ENCODE measurements at regions of chr17 and their contacts with region 1.

Region 1: DNA sequence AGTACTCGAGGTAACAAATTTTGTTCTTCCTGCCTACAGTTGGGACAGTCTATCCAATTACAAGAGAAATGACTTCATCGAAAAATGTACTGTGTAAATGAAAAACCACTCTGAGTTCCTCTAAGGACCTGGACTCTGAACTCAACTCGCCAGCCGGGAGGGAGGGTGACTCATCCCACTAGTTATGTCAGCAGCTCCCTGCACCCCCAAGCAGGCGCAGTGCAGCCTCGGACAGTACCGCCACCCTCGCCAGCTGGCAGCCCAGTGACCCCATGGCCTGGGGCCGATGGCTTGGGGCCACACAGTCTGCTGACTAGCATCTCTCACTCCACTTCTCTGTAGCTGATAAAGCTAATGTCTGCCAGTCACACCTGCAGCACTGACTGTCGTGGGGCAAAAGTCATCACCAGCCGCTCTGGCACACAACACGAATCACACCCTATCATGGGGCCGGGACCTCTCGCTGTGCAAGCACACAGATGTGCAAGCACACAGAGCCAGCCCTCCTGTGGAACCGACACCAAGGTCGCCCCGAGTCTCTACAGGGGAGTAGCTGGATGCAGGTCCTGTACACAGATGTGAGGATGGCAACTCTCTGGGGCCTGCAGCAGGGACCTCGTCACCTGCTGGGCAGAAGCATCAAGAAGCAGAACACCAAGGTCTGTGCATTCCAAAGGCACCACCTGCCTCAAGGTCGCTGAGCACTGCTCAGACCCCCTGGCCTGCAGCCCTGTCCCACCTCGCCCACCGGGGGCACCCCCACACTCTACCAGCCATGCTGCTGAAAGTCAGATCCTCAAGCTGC is 5.7 kb downstream of the CSNK1D start:
- DNase-seq: peak; percentile 76 to 87
- H3K4me3 ChIP-seq: peak overlapping the region; percentile 17; the same call in 1 of the 2 replicates
- H3K27ac ChIP-seq: peak overlapping the region; percentile 42; the same call in 1 of the 2 replicates
- H3K4me1 ChIP-seq: peaks cover 41% of the 10 kb centered on the region
- H3K27me3 ChIP-seq: no peaks in the 10 kb centered on the region
- CTCF ChIP-seq: no peak

Region 2: DNA sequence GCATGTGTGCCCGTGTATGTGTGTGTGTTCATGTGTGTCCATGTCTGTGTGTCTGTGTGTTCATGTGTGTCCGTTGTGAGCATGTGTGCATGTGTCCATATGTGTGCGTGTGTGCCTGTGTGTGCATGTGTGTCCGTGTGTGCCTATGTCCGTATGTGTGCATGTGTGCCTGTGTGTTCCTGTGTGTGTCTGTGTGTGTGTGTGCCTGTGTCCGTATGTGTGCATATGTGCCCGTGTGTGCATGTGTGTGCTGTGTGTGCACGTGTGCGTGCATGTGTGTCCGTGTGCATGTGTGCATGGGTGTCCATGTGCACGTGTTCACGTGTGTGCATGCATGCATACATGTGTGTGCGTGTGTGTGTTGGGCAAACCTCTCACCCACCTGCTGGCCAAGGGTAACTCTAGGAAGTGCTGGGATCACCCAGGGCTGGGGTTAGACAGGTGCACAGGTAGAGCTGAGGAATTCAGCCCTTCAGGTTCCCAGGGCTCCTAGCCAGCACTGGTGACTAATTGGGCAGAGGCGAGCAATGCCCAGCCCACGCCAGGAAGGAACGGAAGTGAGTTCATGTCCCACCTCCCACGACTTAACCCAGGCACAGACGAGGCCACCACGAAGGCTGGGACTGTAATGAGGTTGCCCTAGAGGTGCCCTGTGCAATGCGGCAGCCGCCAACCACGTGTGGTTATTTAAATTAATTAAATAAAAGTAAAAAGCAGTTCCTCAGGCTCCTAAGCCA is 13.9 kb after region 1 on chr17:
- CTCF ChIA-PET with region 1: no interaction called
- POLR2A ChIA-PET with region 1: no interaction called
- intact Hi-C with region 1: no loop called
- DNase-seq: peak; percentile 89 to 90
- H3K4me3 ChIP-seq: no peak overlapping the region; the same call in 1 of the 2 replicates
- H3K27ac ChIP-seq: peak overlapping the region; percentile 90
- H3K4me1 ChIP-seq: peaks cover 48% of the 10 kb centered on the region
- H3K27me3 ChIP-seq: no peaks in the 10 kb centered on the region
- CTCF ChIP-seq: no peak

Region 3: GRCh38 chr17:82297714-82298537 is 30.1 kb after region 1 on chr17:
- CTCF ChIA-PET with region 1: interaction called, 4 read pairs
- POLR2A ChIA-PET with region 1: interaction called, 6 read pairs
- intact Hi-C with region 1: loop called (anchors 2 kb)
- DNase-seq: peak; percentile 73 to 87
- H3K4me3 ChIP-seq: peak overlapping the region; percentile 43
- H3K27ac ChIP-seq: peak overlapping the region; percentile 83
- H3K4me1 ChIP-seq: peaks cover 22% of the 10 kb centered on the region
- H3K27me3 ChIP-seq: no peaks in the 10 kb centered on the region
- CTCF ChIP-seq: no peak

Measured in PC-9 (cell line).